T-cell (primary cell): ENCODE measurements at regions of chr14 and their contacts with region 1.

Region 1: DNA sequence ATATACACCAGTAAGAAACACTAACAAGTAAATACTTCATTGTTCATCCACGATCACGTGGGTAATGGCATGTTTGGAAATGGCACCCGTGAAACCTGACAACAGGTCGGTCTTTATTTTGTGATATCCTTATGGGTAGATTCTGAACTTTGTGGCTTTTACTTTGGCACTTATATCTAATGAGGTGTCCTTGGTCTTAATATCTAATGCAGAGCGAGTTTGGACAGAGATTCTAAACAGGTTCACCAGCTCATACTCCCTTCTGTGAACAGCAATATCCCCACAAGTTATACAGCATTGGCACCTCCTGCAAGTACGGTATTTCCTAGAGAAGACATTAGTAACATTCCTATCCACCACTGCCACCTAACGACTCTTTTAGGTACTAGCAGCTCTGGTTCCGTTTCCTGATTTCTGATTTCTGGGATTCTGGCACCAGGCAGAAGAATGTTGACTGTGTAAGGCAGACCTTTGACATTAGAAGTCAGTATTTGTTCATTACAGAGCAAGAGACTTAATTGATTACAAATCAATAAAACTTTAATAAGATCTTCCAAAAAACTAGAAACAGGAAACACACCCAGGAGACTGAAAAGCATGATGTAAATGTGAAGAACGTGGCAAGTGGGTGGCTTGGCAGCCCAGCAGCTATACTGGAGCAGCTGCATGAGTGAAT is 2.4 kb downstream of the ANG start:
- DNase-seq: peak in 24 of 35 experiments; percentile 5 to 85 (median 22)
- ATAC-seq: peak; percentile 84 to 93 (median 88)
- H3K4me3 ChIP-seq: no peak overlapping the region
- H3K4me3 Mint-ChIP-seq: no peak overlapping the region
- H3K27ac ChIP-seq: no peak overlapping the region
- H3K27ac Mint-ChIP-seq: no peak overlapping the region
- H3K4me1 ChIP-seq: no peaks in the 10 kb centered on the region
- H3K4me1 Mint-ChIP-seq: peaks cover 4 to 6% (median 4%) of the 10 kb centered on the region in 3 donors
- H3K27me3 ChIP-seq: peaks cover 0 to 7% of the 10 kb centered on the region in 2 experiments
- H3K27me3 Mint-ChIP-seq: peaks cover 0 to 2% of the 10 kb centered on the region in 2 donors

Region 2: DNA sequence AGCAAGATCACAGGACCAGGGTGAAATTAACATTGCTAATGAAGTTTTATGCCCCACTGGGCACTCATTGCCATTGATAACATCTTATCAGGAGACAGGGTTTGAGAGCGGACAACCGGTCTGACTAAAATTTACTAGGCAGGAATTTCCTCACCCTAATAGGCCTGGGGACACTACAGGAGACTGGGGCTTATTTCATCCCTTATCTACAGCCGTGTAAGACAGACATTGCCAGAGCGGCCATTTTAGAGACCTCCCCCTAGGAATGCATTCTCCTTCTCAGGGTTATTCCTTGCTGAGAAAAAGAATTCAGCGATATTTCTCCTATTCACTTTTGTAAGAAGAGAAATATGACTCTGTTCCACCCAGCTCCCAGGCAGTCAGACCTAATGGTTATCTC is 572.2 kb before region 1 on chr14:
- CTCF ChIA-PET with region 1: no interaction called
- POLR2A ChIA-PET with region 1: no interaction called
- DNase-seq: no peak
- ATAC-seq: no peak
- H3K4me3 ChIP-seq: no peak overlapping the region
- H3K4me3 Mint-ChIP-seq: no peak overlapping the region
- H3K27ac ChIP-seq: no peak overlapping the region
- H3K27ac Mint-ChIP-seq: no peak overlapping the region
- H3K4me1 ChIP-seq: no peaks in the 10 kb centered on the region
- H3K4me1 Mint-ChIP-seq: no peaks in the 10 kb centered on the region
- H3K27me3 ChIP-seq: peaks cover 0 to 5% of the 10 kb centered on the region in 2 experiments
- H3K27me3 Mint-ChIP-seq: peaks cover 22% of the 10 kb centered on the region in 2 donors

Region 3: GRCh38 chr14:20327005-20327869 is 363.7 kb before region 1 on chr14:
- CTCF ChIA-PET with region 1: interaction called, 10 to 21 read pairs
- POLR2A ChIA-PET with region 1: interaction called in 1 of 2 experiments, 4 read pairs
- DNase-seq: peak in 8 of 35 experiments; percentile 9 to 84 (median 31)
- ATAC-seq: peak; percentile 46 to 72 (median 60)
- H3K4me3 ChIP-seq: no peak overlapping the region
- H3K4me3 Mint-ChIP-seq: peak overlapping the region in 1 of 3 donors; percentile 13
- H3K27ac ChIP-seq: no peak overlapping the region
- H3K27ac Mint-ChIP-seq: peak overlapping the region; percentile 70 to 79
- H3K4me1 ChIP-seq: peaks cover 0 to under 1% of the 10 kb centered on the region in 2 experiments
- H3K4me1 Mint-ChIP-seq: peaks cover 19 to 29% (median 24%) of the 10 kb centered on the region in 3 donors
- H3K27me3 ChIP-seq: no peaks in the 10 kb centered on the region
- H3K27me3 Mint-ChIP-seq: no peaks in the 10 kb centered on the region

Region 4: GRCh38 chr14:20512177-20512905 is 178.6 kb before region 1 on chr14:
- CTCF ChIA-PET with region 1: interaction called in 1 of 2 experiments, 11 read pairs
- POLR2A ChIA-PET with region 1: no interaction called
- DNase-seq: no peak
- ATAC-seq: no peak
- H3K4me3 ChIP-seq: no peak overlapping the region
- H3K4me3 Mint-ChIP-seq: no peak overlapping the region
- H3K27ac ChIP-seq: no peak overlapping the region
- H3K27ac Mint-ChIP-seq: no peak overlapping the region
- H3K4me1 ChIP-seq: no peaks in the 10 kb centered on the region
- H3K4me1 Mint-ChIP-seq: peaks cover 0 to 3% (median 0%) of the 10 kb centered on the region in 3 donors
- H3K27me3 ChIP-seq: no peaks in the 10 kb centered on the region
- H3K27me3 Mint-ChIP-seq: no peaks in the 10 kb centered on the region

Region 5: GRCh38 chr14:20662968-20663732 is 27.8 kb before region 1 on chr14:
- CTCF ChIA-PET with region 1: interaction called, 6 to 10 read pairs
- POLR2A ChIA-PET with region 1: no interaction called
- DNase-seq: peak; percentile 44 to 85 (median 69)
- ATAC-seq: peak; percentile 83 to 92 (median 89)
- H3K4me3 ChIP-seq: peak overlapping the region; percentile 11 to 50
- H3K4me3 Mint-ChIP-seq: peak overlapping the region; percentile 66 to 84 (median 71)
- H3K27ac ChIP-seq: no peak overlapping the region
- H3K27ac Mint-ChIP-seq: peak overlapping the region in 1 of 2 donors; percentile 33
- H3K4me1 ChIP-seq: peaks cover 4 to 22% of the 10 kb centered on the region in 2 experiments
- H3K4me1 Mint-ChIP-seq: peaks cover 28 to 32% (median 32%) of the 10 kb centered on the region in 3 donors
- H3K27me3 ChIP-seq: peaks cover 0 to 33% of the 10 kb centered on the region in 2 experiments
- H3K27me3 Mint-ChIP-seq: peaks cover 12 to 25% of the 10 kb centered on the region in 2 donors